Dorsolateral prefrontal cortex (tissue), 120 donors: ENCODE measurements at regions of chr3 and their contacts with region 1.

Region 1: DNA sequence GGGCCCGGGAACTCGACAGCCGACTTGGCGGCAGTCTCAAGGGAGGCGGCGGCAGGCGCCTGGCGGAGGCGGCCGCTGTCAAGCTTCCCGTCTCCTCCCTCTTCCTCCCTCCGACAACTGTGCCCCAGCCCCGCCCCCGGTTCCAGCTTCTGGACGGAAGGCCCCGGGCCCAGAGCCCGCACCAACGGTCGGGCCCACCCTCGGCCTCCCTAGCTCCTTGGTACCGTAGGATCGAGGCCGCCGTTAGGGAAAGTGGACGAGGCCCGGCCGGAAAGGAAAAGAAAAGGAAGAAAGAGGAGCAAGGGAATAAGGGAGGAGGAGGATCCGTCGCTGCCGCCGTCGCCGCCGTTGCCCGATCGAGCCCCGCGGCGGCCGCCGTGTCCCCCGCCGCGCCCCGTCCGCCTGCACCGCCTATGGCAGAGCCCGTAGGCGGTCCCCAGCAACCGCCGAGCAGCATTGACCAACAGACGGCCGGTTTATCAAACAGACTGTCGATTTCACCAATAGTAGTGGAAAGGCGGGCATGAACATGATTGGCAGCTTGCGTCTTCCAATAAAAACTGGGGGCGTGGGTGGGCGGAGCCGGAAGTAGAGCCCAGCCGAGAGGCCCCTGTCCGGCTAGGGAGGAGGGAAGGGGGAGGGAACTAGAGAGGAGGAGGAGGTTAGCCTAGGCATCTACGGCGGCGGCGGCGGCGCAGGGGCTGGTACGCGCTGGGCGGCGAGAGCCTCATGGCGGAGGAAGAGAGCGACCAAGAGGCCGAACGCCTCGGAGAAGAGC is at the starts of genes CGGBP1 and ZNF654:
- DNase-seq: peak; percentile 96 to 99 (median 98)
- H3K4me3 ChIP-seq: peak within 1 kb of the TSS; percentile 68 to 99 (median 94)
- H3K27ac ChIP-seq: peak within 1 kb of the TSS; percentile 88 to 99 (median 97)
- H3K27me3 ChIP-seq: no peaks in the 10 kb centered on the region
- CTCF ChIP-seq: peak in 16 of 56 donors; percentile 2 to 41 (median 12)
- total RNA-seq, gene CGGBP1: 49.9 to 92.6 (median 67.9) TPM
- total RNA-seq, gene ZNF654: 13.1 to 32.1 (median 20.6) TPM

Region 2: GRCh38 chr3:88013592-88013991 is 45.2 kb before region 1 on chr3:
- intact Hi-C with region 1: loop called in 1 of 2 experiments (anchors 5 kb)
- DNase-seq: no peak
- H3K4me3 ChIP-seq: no peak overlapping the region
- H3K27ac ChIP-seq: no peak overlapping the region
- H3K27me3 ChIP-seq: no peaks in the 10 kb centered on the region
- CTCF ChIP-seq: no peak

Region 3: GRCh38 chr3:88113311-88114162 is 54.8 kb after region 1 on chr3:
- intact Hi-C with region 1: loop called (anchors 5 to 10 kb)
- DNase-seq: peak in 4 of 10 donors; percentile 15 to 60 (median 55)
- H3K4me3 ChIP-seq: no peak overlapping the region
- H3K27ac ChIP-seq: no peak overlapping the region
- H3K27me3 ChIP-seq: no peaks in the 10 kb centered on the region
- CTCF ChIP-seq: peak; percentile 59 to 87 (median 78)

Region 4: DNA sequence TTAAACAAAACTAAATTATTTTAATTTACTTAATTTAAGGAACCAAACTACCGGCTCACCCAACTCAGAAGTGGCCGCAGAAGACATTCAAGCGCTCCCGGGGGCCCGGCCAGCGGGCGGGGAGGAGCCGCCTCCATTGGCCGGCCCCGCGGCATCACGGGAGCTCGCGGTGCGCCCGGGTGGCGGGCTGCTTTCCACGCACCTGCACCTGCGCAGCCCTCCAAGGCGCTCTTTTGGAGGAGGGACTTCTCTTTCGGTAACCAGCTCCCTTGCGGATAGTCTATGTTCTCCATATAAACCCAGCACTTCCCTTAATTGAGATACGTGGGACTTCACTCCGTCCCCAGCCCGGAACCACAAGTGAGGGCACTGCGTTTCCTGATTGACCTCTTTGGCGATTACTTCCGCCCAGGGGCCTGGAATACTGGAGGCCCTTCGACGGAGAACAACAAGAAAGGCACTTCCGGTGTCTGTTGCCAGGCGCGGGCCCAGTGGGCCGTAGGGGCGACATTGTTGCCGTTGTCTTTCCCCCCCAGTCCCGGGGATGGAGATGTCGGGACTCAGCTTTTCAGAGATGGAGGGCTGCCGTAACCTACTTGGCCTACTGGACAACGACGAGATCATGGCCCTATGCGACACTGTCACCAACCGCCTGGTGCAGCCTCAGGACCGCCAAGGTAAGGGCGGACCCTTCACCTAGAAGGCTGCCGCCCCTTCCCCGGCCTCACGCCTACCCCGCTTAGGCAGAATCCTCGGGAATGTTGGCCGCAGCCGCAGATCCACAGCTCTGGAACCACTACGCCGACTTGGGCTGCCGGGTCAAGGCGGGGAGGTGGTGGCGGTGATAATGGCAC is 91.0 kb after region 1 on chr3 and contains the start of gene C3orf38:
- intact Hi-C with region 1: loop called (anchors 2 kb)
- DNase-seq: peak; percentile 74 to 94 (median 90)
- H3K4me3 ChIP-seq: peak within 1 kb of the TSS; percentile 66 to 100 (median 93)
- H3K27ac ChIP-seq: peak within 1 kb of the TSS; percentile 58 to 98 (median 95)
- H3K27me3 ChIP-seq: no peaks in the 10 kb centered on the region
- CTCF ChIP-seq: peak in 19 of 56 donors; percentile 7 to 52 (median 18)
- total RNA-seq, gene C3orf38: 22.1 to 46.3 (median 33.2) TPM

Region 5: GRCh38 chr3:89098964-89099585 is 1040.3 kb after region 1 on chr3:
- intact Hi-C with region 1: no loop called
- DNase-seq: peak in 2 of 10 donors; percentile 27 to 53
- H3K4me3 ChIP-seq: no peak overlapping the region
- H3K27ac ChIP-seq: no peak overlapping the region
- H3K27me3 ChIP-seq: no peaks in the 10 kb centered on the region
- CTCF ChIP-seq: peak; percentile 44 to 93 (median 78)